ENCODE measurements at regions of chr2 and their contacts with region 1.

Region 1: GRCh38 chr2:29923110-29923721 is 1.8 kb upstream of the ALK start:
- DNase-seq: peak; percentile 71
- H3K4me3 ChIP-seq: no peak overlapping the region; a peak in 1 of 4 replicates
- H3K27ac ChIP-seq: no peak overlapping the region; a peak in 1 of 4 replicates
- H3K4me1 ChIP-seq: peaks cover 0 to 11% of the 10 kb centered on the region in 2 experiments; a peak in 2 of 4 replicates
- H3K27me3 ChIP-seq: peaks cover 38% of the 10 kb centered on the region
- CTCF ChIP-seq: peak; percentile 99
- EP300 ChIP-seq: 0 out of 4 replicates have a peak, but pooled peaks of 1 of the 2 experiments have one; percentile 10
- RAD21 ChIP-seq: peak; percentile 99

Region 2: GRCh38 chr2:29165362-29166236 is 757.6 kb before region 1 on chr2:
- CTCF ChIA-PET with region 1: interaction called, 11 read pairs
- POLR2A ChIA-PET with region 1: no interaction called
- DNase-seq: no peak
- H3K4me3 ChIP-seq: no peak overlapping the region
- H3K27ac ChIP-seq: peak overlapping the region; percentile 8 to 94; a peak in 3 of 4 replicates
- H3K4me1 ChIP-seq: peaks cover 14 to 34% of the 10 kb centered on the region in 2 experiments; a peak in 3 of 4 replicates
- H3K27me3 ChIP-seq: no peaks in the 10 kb centered on the region
- CTCF ChIP-seq: no peak
- EP300 ChIP-seq: no peak
- RAD21 ChIP-seq: no peak

Region 3: GRCh38 chr2:29583088-29583487 is 340.1 kb before region 1 on chr2:
- CTCF ChIA-PET with region 1: interaction called, 5 read pairs
- POLR2A ChIA-PET with region 1: interaction called, 11 read pairs
- DNase-seq: no peak
- H3K4me3 ChIP-seq: no peak overlapping the region; a peak in 1 of 4 replicates
- H3K27ac ChIP-seq: peak overlapping the region in 1 of 2 experiments; percentile 100; a peak in 2 of 4 replicates
- H3K4me1 ChIP-seq: peaks cover 9 to 80% of the 10 kb centered on the region in 2 experiments; a peak in 2 of 4 replicates
- H3K27me3 ChIP-seq: peaks cover 16% of the 10 kb centered on the region; the same call in 1 of the 2 replicates
- CTCF ChIP-seq: no peak
- EP300 ChIP-seq: no peak
- RAD21 ChIP-seq: no peak

Region 4: GRCh38 chr2:29759360-29759759 is 163.9 kb before region 1 on chr2:
- CTCF ChIA-PET with region 1: no interaction called
- POLR2A ChIA-PET with region 1: no interaction called
- DNase-seq: no peak
- H3K4me3 ChIP-seq: no peak overlapping the region
- H3K27ac ChIP-seq: peak overlapping the region in 1 of 2 experiments; percentile 87; a peak in 2 of 4 replicates
- H3K4me1 ChIP-seq: peaks cover 0 to 65% of the 10 kb centered on the region in 2 experiments; a peak in 2 of 4 replicates
- H3K27me3 ChIP-seq: no peaks in the 10 kb centered on the region
- CTCF ChIP-seq: no peak
- EP300 ChIP-seq: peak in 1 of 2 experiments; percentile 75; a peak in 2 of 4 replicates
- RAD21 ChIP-seq: no peak

Region 5: DNA sequence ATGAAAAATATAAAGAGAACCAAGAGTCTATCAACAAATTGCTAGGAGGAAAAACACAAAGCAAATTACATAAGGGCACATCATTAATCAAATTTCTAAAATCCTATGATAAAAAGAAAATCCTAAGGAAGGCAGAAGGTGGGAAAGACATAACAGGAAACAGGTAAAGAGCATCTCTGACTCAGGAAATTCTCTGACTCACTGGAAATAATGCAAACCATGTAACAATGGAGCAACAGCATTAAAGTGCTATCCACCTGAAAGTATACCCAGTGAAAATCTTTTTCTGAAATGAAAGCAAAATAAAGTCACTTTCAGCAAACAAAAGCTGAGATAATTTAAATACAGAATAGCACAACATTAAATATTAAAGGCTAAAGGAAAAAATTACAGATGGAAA is 12.8 kb before region 1 on chr2:
- CTCF ChIA-PET with region 1: interaction called, 41 read pairs
- POLR2A ChIA-PET with region 1: interaction called, 9 read pairs
- DNase-seq: no peak
- H3K4me3 ChIP-seq: no peak overlapping the region
- H3K27ac ChIP-seq: no peak overlapping the region
- H3K4me1 ChIP-seq: peaks cover 0 to 31% of the 10 kb centered on the region in 2 experiments; a peak in 2 of 4 replicates
- H3K27me3 ChIP-seq: no peaks in the 10 kb centered on the region; the same call in 1 of the 2 replicates
- CTCF ChIP-seq: no peak
- EP300 ChIP-seq: no peak
- RAD21 ChIP-seq: no peak

Region 6: GRCh38 chr2:29963972-29964570 is 40.9 kb after region 1 on chr2:
- CTCF ChIA-PET with region 1: interaction called, 29 read pairs
- POLR2A ChIA-PET with region 1: no interaction called
- DNase-seq: no peak
- H3K4me3 ChIP-seq: no peak overlapping the region
- H3K27ac ChIP-seq: no peak overlapping the region
- H3K4me1 ChIP-seq: no peaks in the 10 kb centered on the region
- H3K27me3 ChIP-seq: no peaks in the 10 kb centered on the region
- CTCF ChIP-seq: no peak
- EP300 ChIP-seq: no peak
- RAD21 ChIP-seq: no peak

Region 7: GRCh38 chr2:30037016-30037415 is 113.8 kb after region 1 on chr2:
- CTCF ChIA-PET with region 1: interaction called, 398 read pairs
- POLR2A ChIA-PET with region 1: no interaction called
- DNase-seq: no peak
- H3K4me3 ChIP-seq: no peak overlapping the region
- H3K27ac ChIP-seq: no peak overlapping the region
- H3K4me1 ChIP-seq: no peaks in the 10 kb centered on the region
- H3K27me3 ChIP-seq: peaks cover 8% of the 10 kb centered on the region; the same call in 1 of the 2 replicates
- CTCF ChIP-seq: no peak
- EP300 ChIP-seq: no peak
- RAD21 ChIP-seq: no peak

Region 8: DNA sequence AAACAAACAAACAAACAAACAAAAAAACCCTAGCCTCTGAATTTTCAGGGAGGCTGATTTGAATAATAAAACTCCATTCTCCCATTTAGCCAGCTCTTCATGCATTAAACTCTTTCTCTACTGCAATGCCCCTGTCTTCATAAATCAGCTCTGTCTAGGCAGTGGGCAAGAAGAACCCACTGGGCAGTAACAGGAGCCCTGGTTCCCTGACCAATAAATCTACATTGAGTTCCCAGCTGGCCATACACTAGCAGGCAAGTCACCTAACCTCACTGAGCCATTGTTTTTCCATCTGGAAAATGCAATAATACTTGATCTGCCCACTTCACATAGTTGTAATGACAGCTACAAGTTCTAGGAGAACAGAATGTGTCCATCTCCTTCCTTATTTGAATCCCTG is 166.0 kb after region 1 on chr2:
- CTCF ChIA-PET with region 1: interaction called, 13 read pairs
- POLR2A ChIA-PET with region 1: no interaction called
- DNase-seq: no peak
- H3K4me3 ChIP-seq: no peak overlapping the region
- H3K27ac ChIP-seq: no peak overlapping the region
- H3K4me1 ChIP-seq: no peaks in the 10 kb centered on the region; a peak in 1 of 4 replicates
- H3K27me3 ChIP-seq: no peaks in the 10 kb centered on the region
- CTCF ChIP-seq: no peak
- EP300 ChIP-seq: no peak
- RAD21 ChIP-seq: no peak

Measured in SK-N-SH (cell line).